Ascending aorta (tissue), 2 donors: ENCODE measurements at regions of chr2 and their contacts with region 1.

Region 1: GRCh38 chr2:164992818-164993217 is 37.5 kb upstream of the SLC38A11 start:
- DNase-seq: peak in 1 of 2 donors; percentile 74
- H3K4me3 ChIP-seq: no peak overlapping the region
- H3K27ac ChIP-seq: peak overlapping the region in 1 of 2 donors; percentile 80
- H3K4me1 ChIP-seq: peaks cover 0 to 13% of the 10 kb centered on the region in 2 donors
- H3K27me3 ChIP-seq: no peaks in the 10 kb centered on the region
- CTCF ChIP-seq: peak; percentile 25 to 68 (median 51)

Region 2: GRCh38 chr2:164737612-164738081 is 255.2 kb before region 1 on chr2:
- intact Hi-C with region 1: loop called (anchors 10 kb)
- DNase-seq: peak in 1 of 2 donors; percentile 76
- H3K4me3 ChIP-seq: peak overlapping the region in 1 of 2 donors; percentile 47
- H3K27ac ChIP-seq: no peak overlapping the region
- H3K4me1 ChIP-seq: peaks cover 4 to 17% of the 10 kb centered on the region in 2 donors
- H3K27me3 ChIP-seq: no peaks in the 10 kb centered on the region
- CTCF ChIP-seq: peak; percentile 63 to 81 (median 74)

Region 3: DNA sequence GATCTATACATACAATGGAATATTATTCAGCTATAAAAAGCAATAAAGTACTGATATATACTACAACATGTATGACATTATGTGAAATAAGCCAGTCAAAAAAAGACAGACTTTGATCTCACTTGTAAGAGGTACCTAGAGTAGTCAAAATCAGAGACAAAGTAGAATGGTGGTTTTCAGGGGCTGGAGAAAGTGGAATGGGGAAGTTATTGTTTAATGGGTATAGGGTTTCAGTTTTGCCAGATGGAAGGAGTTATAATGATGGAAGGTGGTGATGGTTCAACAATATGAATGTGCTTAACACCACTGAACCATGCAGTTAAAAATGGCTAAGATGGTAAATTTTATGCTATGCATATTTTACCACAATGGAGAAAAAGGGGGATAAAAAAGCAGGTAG is 157.5 kb before region 1 on chr2:
- intact Hi-C with region 1: no loop called
- DNase-seq: no peak
- H3K4me3 ChIP-seq: no peak overlapping the region
- H3K27ac ChIP-seq: peak overlapping the region in 1 of 2 donors; percentile 57
- H3K4me1 ChIP-seq: peaks cover 0 to 22% of the 10 kb centered on the region in 2 donors
- H3K27me3 ChIP-seq: no peaks in the 10 kb centered on the region
- CTCF ChIP-seq: no peak

Region 4: DNA sequence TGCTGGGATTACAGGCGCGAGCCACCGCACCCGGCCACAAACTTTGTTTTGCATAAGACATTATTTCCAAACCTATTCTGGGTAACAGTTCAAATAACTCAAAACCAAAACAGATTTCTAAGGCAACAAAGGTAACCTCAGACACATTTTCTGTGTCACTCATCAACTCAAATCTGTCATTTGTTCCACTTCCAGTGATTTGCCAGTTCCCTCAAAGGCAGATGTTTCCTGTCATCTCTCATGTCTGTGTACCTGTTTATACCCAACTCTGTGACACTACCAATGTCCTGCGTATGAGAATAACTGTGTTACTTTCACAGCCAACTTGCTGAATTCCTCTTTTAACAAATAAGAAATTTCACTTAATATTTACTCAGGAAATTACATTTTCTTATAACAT is 156.6 kb after region 1 on chr2:
- intact Hi-C with region 1: no loop called
- DNase-seq: no peak
- H3K4me3 ChIP-seq: no peak overlapping the region
- H3K27ac ChIP-seq: no peak overlapping the region
- H3K4me1 ChIP-seq: no peaks in the 10 kb centered on the region
- H3K27me3 ChIP-seq: no peaks in the 10 kb centered on the region
- CTCF ChIP-seq: no peak

Region 5: DNA sequence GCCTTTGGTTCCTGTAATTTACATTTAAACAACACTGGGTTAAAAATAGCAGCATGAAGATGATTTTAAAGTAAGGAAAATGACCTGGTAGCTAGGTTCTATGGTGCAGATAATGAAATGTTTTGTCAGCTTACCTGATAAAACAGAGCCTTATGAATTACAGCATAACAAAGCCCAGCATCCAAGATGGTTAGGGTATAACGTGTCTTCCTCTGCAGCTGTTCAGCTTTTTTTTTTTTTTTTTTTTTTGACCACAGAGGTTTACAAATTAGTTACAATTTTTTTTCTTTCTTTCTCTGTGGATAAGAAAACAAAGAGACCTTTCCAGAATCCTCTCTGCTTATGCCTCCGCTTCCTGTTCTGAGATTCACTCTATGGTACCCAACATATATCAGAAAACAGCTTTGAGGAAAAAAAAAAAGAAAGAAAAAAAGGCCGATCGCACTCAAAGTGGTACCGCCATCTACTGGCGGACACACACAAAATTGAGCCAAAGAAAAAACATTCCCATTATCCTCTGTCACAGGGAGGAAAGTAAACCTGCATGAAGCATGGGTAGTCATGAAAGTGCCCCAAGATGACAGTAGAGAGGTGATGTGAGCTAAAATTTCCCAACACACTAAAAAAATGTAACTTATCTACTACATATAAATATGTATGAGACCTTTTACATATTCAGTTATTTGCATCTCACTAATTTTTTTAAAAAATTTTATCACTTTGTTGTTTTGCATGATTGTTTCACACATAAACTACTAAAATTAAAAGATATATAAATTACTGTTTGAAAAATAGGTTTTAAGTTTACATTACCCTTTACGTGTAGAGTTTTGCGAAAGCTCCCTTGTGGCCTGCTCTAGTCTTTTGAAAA is 211.1 kb after region 1 on chr2 and contains the start of gene SCN3A:
- intact Hi-C with region 1: loop called (anchors 5 kb)
- DNase-seq: no peak
- H3K4me3 ChIP-seq: peak within 1 kb of the TSS in 1 of 2 donors; percentile 21
- H3K27ac ChIP-seq: no peak within 1 kb of the TSS
- H3K4me1 ChIP-seq: no peaks in the 10 kb centered on the region
- H3K27me3 ChIP-seq: no peaks in the 10 kb centered on the region
- CTCF ChIP-seq: peak; percentile 6 to 64 (median 54)
- total RNA-seq, gene SCN3A: 1.4 TPM

Region 6: DNA sequence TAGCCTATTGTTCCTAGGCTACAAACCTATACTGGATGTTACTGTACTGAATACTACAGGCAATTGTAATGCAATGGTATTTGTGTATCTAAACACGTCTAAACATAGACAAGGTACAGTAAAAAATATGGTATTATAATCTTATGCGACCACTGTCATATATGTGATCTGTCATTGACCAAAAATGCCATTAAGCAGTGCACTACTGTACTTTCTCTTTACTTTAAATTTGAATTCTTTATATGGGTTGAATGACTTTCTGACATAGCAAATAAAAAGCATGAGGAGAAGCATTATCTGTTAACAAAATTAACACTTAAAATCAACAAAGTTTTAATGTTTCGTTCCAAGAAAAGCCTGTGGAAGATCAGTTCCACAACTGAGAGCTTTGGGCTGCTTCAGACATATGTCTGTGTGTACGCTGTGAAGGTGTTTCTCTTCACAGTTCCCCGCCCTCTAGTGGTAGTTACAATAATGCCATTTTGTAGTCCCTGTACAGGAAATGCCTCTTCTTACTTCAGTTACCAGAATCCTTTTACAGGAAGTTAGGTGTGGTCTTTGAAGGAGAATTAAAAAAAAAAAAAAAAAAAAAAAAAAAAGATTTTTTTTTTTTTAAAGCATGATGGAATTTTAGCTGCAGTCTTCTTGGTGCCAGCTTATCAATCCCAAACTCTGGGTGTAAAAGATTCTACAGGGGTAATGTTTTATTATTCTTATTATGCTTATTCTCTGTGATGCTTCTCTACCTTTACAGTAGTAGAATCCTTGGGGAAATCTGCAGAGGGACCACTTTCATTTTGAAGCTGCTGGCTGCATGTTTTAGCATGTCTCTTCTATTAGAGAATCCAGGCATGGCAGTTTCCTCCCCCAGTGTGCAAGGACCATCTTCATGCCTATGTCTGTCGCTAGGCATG is 300.9 kb after region 1 on chr2:
- intact Hi-C with region 1: loop called (anchors 5 kb)
- DNase-seq: no peak
- H3K4me3 ChIP-seq: no peak overlapping the region
- H3K27ac ChIP-seq: no peak overlapping the region
- H3K4me1 ChIP-seq: no peaks in the 10 kb centered on the region
- H3K27me3 ChIP-seq: no peaks in the 10 kb centered on the region
- CTCF ChIP-seq: peak; percentile 42 to 71 (median 59)

Region 7: GRCh38 chr2:165698444-165698894 is 705.7 kb after region 1 on chr2:
- intact Hi-C with region 1: loop called (anchors 10 kb)
- DNase-seq: peak in 1 of 2 donors; percentile 69
- H3K4me3 ChIP-seq: no peak overlapping the region
- H3K27ac ChIP-seq: no peak overlapping the region
- H3K4me1 ChIP-seq: peaks cover 0 to 2% of the 10 kb centered on the region in 2 donors
- H3K27me3 ChIP-seq: no peaks in the 10 kb centered on the region
- CTCF ChIP-seq: peak; percentile 25 to 58 (median 48)

Region 8: GRCh38 chr2:165953655-165954606 is 961.1 kb after region 1 on chr2 and contains the start of gene TTC21B:
- intact Hi-C with region 1: loop called (anchors 5 kb)
- DNase-seq: peak; percentile 76 to 97
- H3K4me3 ChIP-seq: peak within 1 kb of the TSS; percentile 77 to 95
- H3K27ac ChIP-seq: peak within 1 kb of the TSS; percentile 79 to 82
- H3K4me1 ChIP-seq: peaks cover 0 to 16% of the 10 kb centered on the region in 2 donors
- H3K27me3 ChIP-seq: no peaks in the 10 kb centered on the region
- CTCF ChIP-seq: peak; percentile 67 to 83 (median 78)
- total RNA-seq, gene TTC21B: 5.5 TPM

Region 9: DNA sequence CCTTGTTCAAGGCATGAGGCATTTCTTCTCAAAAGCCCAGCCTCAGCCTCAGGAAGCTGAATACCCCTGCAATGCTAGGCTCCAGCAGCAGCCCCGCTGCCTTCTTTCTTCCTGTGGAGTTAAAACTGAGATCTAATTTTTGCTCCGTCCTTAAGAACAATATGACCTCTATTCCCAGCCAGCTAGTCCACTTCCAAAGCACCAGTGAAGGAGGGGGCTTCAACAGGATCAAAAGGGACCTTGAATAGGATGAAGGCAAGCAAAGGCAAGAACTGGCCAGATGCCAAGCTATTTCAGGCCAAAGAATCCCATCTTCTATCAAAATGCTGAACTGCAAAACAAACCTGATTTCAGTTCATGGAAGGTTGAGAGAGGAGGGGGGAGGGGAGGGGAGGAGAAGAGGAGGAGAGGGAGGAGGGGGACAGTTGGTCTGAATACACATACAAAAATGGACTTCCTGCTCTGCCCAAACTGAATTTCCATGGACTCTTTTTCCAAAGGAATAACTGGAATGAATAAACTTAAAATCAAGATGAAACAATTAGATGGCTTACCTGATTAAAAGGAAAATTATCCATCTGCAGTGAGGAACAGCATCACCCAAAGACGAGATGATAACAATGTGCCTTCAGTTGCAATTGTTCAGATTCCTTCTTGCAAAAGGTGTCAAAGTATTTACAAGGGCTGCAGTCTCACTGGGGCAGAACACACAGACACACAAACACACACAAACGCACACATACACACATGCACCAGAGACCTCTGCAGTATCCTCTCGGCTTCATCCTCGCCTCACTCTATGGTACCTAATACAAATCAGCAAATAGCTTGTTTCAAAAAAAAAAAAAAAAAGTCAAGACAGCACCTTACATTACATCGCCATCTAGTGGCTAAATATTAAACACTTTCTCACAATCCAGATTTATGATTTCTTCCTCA is 1134.7 kb after region 1 on chr2 and contains the start of gene SCN1A:
- intact Hi-C with region 1: loop called (anchors 10 kb)
- DNase-seq: no peak
- H3K4me3 ChIP-seq: no peak within 1 kb of the TSS
- H3K27ac ChIP-seq: no peak within 1 kb of the TSS
- H3K4me1 ChIP-seq: no peaks in the 10 kb centered on the region
- H3K27me3 ChIP-seq: no peaks in the 10 kb centered on the region
- CTCF ChIP-seq: peak in 2 of 3 experiments; percentile 47 to 63
- total RNA-seq, gene SCN1A: not detected

Region 10: GRCh38 chr2:166417669-166418068 is 1424.9 kb after region 1 on chr2:
- intact Hi-C with region 1: no loop called
- DNase-seq: no peak
- H3K4me3 ChIP-seq: no peak overlapping the region
- H3K27ac ChIP-seq: no peak overlapping the region
- H3K4me1 ChIP-seq: no peaks in the 10 kb centered on the region
- H3K27me3 ChIP-seq: no peaks in the 10 kb centered on the region
- CTCF ChIP-seq: no peak